Activated naive CD4-positive, alpha-beta T cell treated with anti-CD3 and anti-CD28 coated beads for 36 hours (primary cell): ENCODE measurements at regions of chr12 and their contacts with region 1.

Region 1: GRCh38 chr12:85866986-85867776 is 6.9 kb upstream of the NTS start:
- DNase-seq: peak; percentile 23
- H3K4me3 Mint-ChIP-seq: no peak overlapping the region
- H3K27ac Mint-ChIP-seq: no peak overlapping the region
- H3K4me1 Mint-ChIP-seq: no peaks in the 10 kb centered on the region
- H3K27me3 Mint-ChIP-seq: no peaks in the 10 kb centered on the region

Region 2: GRCh38 chr12:85007836-85008235 is 859.3 kb before region 1 on chr12:
- CTCF ChIA-PET with region 1: no interaction called
- intact Hi-C with region 1: no loop called
- DNase-seq: no peak
- H3K4me3 Mint-ChIP-seq: no peak overlapping the region
- H3K27ac Mint-ChIP-seq: no peak overlapping the region
- H3K4me1 Mint-ChIP-seq: no peaks in the 10 kb centered on the region
- H3K27me3 Mint-ChIP-seq: no peaks in the 10 kb centered on the region

Region 3: DNA sequence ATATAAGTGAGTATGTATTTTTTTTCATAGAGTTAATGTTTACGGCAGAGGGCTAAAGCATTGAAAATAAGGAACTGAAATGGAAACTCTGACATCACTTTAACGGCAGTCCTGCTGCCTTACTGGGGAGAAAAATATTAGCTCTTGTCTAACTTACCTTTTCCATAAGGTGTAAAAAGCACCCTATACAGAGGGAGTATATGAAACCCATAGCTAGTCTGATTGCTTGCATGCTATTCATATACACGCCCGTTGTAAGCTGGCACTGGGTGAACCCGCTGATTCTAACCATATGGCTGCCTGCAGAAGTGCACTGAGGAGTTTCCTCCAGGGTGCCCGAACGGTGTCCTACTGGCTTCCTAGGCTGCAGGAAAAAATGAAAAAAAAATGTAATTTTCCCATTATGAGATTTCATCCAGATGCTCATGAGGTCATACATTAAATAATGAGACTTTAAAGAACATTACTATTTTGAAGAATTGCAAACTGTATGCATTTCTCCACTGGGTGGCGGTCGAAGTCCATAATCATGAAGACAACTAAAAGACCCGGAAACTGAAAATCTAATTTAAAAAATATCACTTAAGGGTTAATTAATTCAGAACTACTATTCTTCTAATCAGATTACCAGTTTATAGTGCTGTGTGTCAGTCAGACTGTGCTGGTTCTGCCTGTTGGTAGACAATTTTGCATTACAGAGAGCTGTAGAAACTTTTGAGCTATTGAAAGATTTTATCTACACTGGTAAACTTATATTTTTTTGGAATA is 442.4 kb before region 1 on chr12:
- CTCF ChIA-PET with region 1: interaction called, 4 read pairs
- intact Hi-C with region 1: loop called (anchors 1 kb)
- DNase-seq: peak; percentile 50
- H3K4me3 Mint-ChIP-seq: no peak overlapping the region
- H3K27ac Mint-ChIP-seq: no peak overlapping the region
- H3K4me1 Mint-ChIP-seq: no peaks in the 10 kb centered on the region
- H3K27me3 Mint-ChIP-seq: no peaks in the 10 kb centered on the region

Region 4: GRCh38 chr12:85468356-85469157 is 398.6 kb before region 1 on chr12:
- CTCF ChIA-PET with region 1: interaction called, 6 read pairs
- intact Hi-C with region 1: loop called (anchors 1 kb)
- DNase-seq: peak; percentile 64
- H3K4me3 Mint-ChIP-seq: peak overlapping the region; percentile 72
- H3K27ac Mint-ChIP-seq: no peak overlapping the region
- H3K4me1 Mint-ChIP-seq: peaks cover 11% of the 10 kb centered on the region
- H3K27me3 Mint-ChIP-seq: peaks cover 11% of the 10 kb centered on the region

Region 5: DNA sequence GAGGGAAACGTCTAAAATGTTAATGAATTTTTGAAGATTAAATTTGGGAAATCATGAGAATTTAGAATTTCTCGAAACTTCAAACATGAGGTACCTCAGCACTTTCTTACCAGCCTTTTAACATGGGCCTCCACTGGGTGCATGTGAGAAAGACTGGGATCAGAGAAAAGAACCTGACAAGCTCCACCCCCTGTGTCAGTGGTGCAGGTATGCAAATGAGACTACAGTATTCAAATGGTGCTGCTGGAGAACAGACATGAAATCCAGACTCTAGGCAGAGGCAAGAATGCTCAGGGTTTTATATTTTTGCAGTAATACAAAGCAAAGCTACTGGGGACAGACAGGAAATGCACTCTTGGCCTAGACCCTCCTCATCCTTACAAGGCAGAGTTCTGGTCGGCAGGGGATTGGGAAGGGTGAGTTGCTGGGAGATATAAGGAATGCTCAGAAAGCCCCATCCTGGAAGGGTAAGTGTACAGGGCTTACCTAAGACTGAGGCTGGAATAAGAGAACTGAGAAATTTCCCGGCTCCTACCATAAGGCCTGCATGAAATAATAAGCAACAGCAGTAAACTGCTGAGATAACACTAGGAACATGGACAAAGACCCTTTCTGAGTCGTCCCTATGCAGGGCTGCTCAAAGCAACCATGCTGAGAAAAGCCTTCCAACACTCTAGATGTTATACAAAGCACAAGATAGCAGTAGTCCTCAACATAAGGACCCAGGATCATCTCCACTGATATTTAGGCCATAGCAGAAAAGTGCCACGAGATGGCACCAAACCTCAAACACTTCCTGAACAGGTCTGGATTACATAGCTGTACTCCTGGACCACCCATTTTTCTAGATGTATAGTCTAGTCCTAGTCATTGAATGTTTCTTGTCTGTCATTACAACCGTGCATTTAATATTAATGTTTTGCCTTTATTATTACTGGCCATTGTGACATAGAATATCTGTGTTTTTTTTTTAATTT is 291.8 kb before region 1 on chr12:
- CTCF ChIA-PET with region 1: interaction called, 5 read pairs
- intact Hi-C with region 1: loop called (anchors 1 kb)
- DNase-seq: peak; percentile 39
- H3K4me3 Mint-ChIP-seq: no peak overlapping the region
- H3K27ac Mint-ChIP-seq: no peak overlapping the region
- H3K4me1 Mint-ChIP-seq: no peaks in the 10 kb centered on the region
- H3K27me3 Mint-ChIP-seq: no peaks in the 10 kb centered on the region

Region 6: GRCh38 chr12:85855305-85855704 is 11.9 kb before region 1 on chr12:
- CTCF ChIA-PET with region 1: interaction called, 17 read pairs
- intact Hi-C with region 1: no loop called
- DNase-seq: no peak
- H3K4me3 Mint-ChIP-seq: no peak overlapping the region
- H3K27ac Mint-ChIP-seq: no peak overlapping the region
- H3K4me1 Mint-ChIP-seq: no peaks in the 10 kb centered on the region
- H3K27me3 Mint-ChIP-seq: no peaks in the 10 kb centered on the region

Region 7: GRCh38 chr12:86565030-86565429 is 697.8 kb after region 1 on chr12:
- CTCF ChIA-PET with region 1: no interaction called
- intact Hi-C with region 1: no loop called
- DNase-seq: no peak
- H3K4me3 Mint-ChIP-seq: no peak overlapping the region
- H3K27ac Mint-ChIP-seq: no peak overlapping the region
- H3K4me1 Mint-ChIP-seq: no peaks in the 10 kb centered on the region
- H3K27me3 Mint-ChIP-seq: no peaks in the 10 kb centered on the region